Activated CD8-positive, alpha-beta T cell treated with anti-CD3 and anti-CD28 coated beads, Interleukin-2, amount 10 ng/mL, durations not matched to agents 7 days and 5 days (primary cell): ENCODE measurements at regions of chr12 and their contacts with region 1.

Region 1: GRCh38 chr12:31267966-31268365 is 58.0 kb downstream of the SINHCAF start:
- DNase-seq: no peak
- ATAC-seq: no peak
- H3K4me3 Mint-ChIP-seq: no peak overlapping the region
- H3K27ac Mint-ChIP-seq: no peak overlapping the region
- H3K4me1 Mint-ChIP-seq: no peaks in the 10 kb centered on the region
- H3K27me3 Mint-ChIP-seq: no peaks in the 10 kb centered on the region

Region 2: GRCh38 chr12:30847259-30847658 is 420.7 kb before region 1 on chr12:
- CTCF ChIA-PET with region 1: interaction called, 41 read pairs
- POLR2A ChIA-PET with region 1: no interaction called
- DNase-seq: peak; percentile 63
- ATAC-seq: no peak
- H3K4me3 Mint-ChIP-seq: no peak overlapping the region
- H3K27ac Mint-ChIP-seq: no peak overlapping the region
- H3K4me1 Mint-ChIP-seq: peaks cover 6% of the 10 kb centered on the region
- H3K27me3 Mint-ChIP-seq: no peaks in the 10 kb centered on the region

Region 3: DNA sequence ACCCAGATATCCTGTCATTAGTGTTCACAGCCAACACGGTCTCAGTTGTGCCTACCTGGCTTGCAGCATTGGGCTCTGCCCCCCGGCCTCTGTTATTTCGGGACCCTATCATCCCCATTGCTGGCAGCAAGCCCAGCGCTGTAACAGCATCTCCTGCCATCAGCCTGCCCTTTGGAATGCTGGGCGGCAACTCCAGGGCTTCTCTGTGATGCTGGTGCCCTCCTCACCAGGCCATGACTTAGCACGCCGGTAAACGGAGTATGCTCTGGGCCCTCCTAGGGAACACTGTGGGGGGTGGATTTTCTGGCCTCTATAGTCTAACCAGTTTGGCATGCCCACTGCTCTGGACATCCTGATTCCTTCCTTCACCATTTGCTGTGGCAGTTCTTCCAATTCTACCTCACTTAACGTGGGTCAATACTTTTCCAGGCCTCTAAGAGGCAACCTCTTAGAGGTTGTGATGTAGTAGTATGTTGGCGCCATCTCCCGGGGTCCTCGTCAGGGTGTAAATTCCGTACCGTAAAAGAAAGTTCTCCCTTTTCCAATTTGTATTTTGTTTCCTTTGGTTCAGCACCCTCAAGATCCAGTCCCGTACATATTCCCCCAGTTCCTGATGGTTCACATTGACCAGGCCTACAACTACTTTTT is 22.0 kb before region 1 on chr12:
- CTCF ChIA-PET with region 1: interaction called, 23 read pairs
- POLR2A ChIA-PET with region 1: no interaction called
- DNase-seq: no peak
- ATAC-seq: no peak
- H3K4me3 Mint-ChIP-seq: no peak overlapping the region
- H3K27ac Mint-ChIP-seq: no peak overlapping the region
- H3K4me1 Mint-ChIP-seq: no peaks in the 10 kb centered on the region
- H3K27me3 Mint-ChIP-seq: peaks cover under 1% of the 10 kb centered on the region

Region 4: DNA sequence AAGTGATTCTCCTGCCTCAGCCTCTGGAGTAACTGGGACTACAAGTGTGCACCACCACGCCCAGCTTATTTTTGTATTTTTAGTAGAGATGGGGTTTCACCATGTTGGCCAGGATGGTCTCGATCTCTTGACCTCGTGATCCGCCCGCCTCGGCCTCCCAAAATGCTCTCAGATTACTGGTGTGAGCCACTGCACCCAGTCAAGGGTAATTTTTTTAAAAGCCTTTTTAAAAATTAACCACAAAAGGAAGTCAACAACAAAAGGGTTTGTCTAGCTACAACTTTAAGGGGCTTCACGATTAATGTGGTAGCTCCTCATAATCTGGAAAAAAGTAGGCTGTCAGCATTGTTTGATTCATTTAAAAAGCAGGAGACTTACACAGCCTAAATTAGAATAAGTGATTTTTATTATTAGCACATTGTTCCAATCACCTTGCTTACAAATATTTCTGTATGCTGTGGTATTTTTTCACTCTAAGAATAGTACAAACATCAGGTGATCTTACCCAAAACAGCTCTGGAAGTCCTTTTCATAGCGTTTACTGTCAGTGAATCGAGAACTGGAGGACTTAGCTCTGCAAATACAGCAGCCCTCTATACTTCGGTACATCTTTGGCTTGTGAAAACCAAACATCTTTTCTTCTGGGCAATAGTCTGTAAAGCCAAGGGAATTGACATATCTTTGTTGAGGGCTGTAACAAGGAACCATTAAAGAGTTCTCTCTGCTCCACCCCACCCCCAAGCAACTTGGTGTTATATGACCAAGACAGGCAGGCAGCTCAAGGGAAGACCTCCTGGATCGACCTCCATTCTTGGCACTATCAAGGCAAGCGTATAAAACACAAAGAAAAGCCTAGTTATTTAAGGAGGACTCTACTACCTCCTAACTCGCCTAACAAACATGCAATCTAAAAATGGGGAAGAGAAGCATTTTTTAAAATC is 29.9 kb after region 1 on chr12:
- CTCF ChIA-PET with region 1: interaction called, 18 read pairs
- POLR2A ChIA-PET with region 1: no interaction called
- DNase-seq: no peak
- ATAC-seq: no peak
- H3K4me3 Mint-ChIP-seq: no peak overlapping the region
- H3K27ac Mint-ChIP-seq: peak overlapping the region; percentile 68
- H3K4me1 Mint-ChIP-seq: peaks cover 21% of the 10 kb centered on the region
- H3K27me3 Mint-ChIP-seq: no peaks in the 10 kb centered on the region

Region 5: DNA sequence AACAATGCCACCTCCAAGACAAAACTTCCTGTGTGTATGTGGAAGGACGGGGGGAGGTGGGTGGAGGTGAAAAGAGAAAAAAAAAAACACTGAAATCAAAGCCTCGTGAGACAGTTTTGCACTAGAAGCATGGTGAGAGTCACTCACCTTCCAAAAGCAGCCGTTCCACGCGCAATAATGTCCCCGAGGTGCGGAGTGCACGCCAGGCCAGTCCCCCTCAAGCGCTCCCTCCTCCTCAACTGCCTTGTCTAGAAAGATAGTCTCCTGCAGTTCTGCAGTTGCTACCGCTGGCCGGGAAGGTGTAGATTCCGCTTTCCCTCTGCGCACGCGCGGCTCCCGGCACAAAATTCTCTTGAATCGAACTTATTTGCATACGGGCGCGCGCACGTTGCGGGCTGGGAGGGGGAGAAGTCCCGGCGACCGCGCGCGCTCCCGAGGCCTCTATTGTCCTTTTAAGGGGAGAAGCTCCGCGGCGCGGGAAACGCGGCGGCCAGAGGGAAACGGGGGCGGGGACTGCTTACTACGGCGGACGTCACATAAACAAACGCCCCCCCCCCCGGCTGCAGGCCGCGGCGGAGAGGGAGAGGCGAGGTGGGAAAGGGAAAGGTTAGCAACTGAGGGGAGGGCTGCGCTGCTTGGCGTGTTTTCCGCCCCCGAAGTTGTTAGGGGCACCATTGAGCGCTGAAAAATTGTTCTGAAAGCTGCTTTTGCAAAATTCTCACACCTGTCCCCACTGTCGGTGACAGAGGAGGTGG is 58.1 kb after region 1 on chr12 and contains the start of gene SINHCAF:
- CTCF ChIA-PET with region 1: interaction called, 12 read pairs
- POLR2A ChIA-PET with region 1: interaction called, 3 read pairs
- DNase-seq: peak; percentile 99
- ATAC-seq: peak; percentile 60
- H3K4me3 Mint-ChIP-seq: peak within 1 kb of the TSS; percentile 98
- H3K27ac Mint-ChIP-seq: peak within 1 kb of the TSS; percentile 99
- H3K4me1 Mint-ChIP-seq: peaks cover 29% of the 10 kb centered on the region
- H3K27me3 Mint-ChIP-seq: no peaks in the 10 kb centered on the region
- total RNA-seq, gene SINHCAF: 81.9 to 98.0 TPM